ENCODE measurements at regions of chr9 and their contacts with region 1.

Region 1: GRCh38 chr9:86434039-86434726 is 80.0 kb upstream of the TUT7 start:
- DNase-seq: peak in 1 of 2 donors; percentile 86
- H3K4me3 ChIP-seq: peak overlapping the region in 1 of 4 donors; percentile 5
- H3K27ac ChIP-seq: peak overlapping the region in 1 of 5 donors; percentile 35
- H3K4me1 ChIP-seq: peaks cover 0 to 9% (median 2%) of the 10 kb centered on the region in 4 donors
- H3K27me3 ChIP-seq: no peaks in the 10 kb centered on the region
- CTCF ChIP-seq: peak in 5 of 7 experiments; percentile 59 to 77 (median 71)
- EP300 ChIP-seq: no peak
- POLR2A ChIP-seq: no peak

Region 2: DNA sequence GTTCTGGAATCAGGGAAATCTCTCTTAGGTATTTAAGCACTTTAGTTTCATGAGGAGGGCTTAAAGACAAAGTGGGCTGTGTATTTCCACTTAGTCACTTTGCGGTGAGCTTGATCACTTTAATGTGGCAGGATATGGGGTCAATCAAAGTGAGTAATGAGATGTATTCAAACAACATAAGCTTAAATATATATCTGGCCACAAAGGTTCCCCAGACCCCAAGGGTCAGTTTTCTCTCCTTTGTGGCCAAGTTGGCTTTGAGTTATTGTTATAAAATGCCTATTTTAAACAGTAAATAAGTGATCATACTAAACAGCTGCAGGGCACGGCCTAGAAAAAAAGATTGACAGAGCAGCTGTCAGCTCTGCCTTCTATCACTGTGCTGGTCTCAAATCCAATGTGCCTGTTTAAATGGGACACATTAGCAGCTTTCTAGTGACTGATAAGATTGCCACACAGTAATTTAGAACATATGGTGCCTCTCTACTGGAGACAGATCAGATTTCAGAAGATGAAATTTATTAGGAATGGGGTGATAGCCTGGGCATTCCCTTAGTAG is 1056.4 kb before region 1 on chr9:
- intact Hi-C with region 1: no loop called
- DNase-seq: no peak
- H3K4me3 ChIP-seq: no peak overlapping the region
- H3K27ac ChIP-seq: no peak overlapping the region
- H3K4me1 ChIP-seq: no peaks in the 10 kb centered on the region
- H3K27me3 ChIP-seq: no peaks in the 10 kb centered on the region
- CTCF ChIP-seq: no peak
- EP300 ChIP-seq: no peak
- POLR2A ChIP-seq: no peak

Region 3: DNA sequence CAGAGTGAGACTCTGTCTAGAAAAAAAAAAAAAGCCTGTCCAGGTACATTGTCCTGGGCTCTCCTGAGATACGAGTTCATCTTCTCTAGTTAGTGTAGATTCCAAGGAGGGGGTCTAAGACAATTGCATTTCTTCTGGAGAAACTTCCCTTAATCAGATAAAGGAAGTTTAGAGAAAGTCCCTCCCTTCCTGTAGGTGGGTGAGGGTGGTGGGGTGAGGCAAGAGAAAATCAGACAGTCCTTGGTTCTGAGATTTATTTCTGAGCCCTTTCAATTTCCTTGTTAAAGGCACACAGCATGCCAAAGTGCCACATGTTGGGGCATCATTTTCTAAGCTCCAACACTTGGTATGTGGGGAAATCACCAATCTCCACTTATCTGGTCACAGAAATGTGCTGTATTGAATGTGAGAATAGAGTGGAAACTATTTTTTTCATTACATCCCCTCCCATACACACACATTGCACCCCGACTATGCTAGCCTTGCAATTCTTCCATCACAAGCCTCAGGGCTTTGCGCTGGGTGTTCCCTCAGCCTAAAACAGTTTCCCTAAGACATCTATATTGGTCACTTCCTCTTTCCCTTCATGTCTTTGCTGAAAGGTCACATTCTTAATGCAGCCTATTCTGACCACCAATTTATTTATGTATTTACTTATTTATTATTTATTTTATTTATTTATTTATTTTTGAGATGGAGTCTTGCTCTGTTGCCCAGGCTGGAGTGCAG is 74.9 kb before region 1 on chr9:
- intact Hi-C with region 1: no loop called
- DNase-seq: no peak
- H3K4me3 ChIP-seq: no peak overlapping the region
- H3K27ac ChIP-seq: no peak overlapping the region
- H3K4me1 ChIP-seq: peaks cover 0 to 13% (median 4%) of the 10 kb centered on the region in 4 donors
- H3K27me3 ChIP-seq: no peaks in the 10 kb centered on the region
- CTCF ChIP-seq: no peak
- EP300 ChIP-seq: no peak
- POLR2A ChIP-seq: no peak

Region 4: GRCh38 chr9:87324613-87325194 is 890.5 kb after region 1 on chr9:
- intact Hi-C with region 1: loop called (anchors 5 kb)
- DNase-seq: peak in 1 of 2 donors; percentile 84
- H3K4me3 ChIP-seq: no peak overlapping the region
- H3K27ac ChIP-seq: no peak overlapping the region
- H3K4me1 ChIP-seq: peaks cover 0 to 5% (median 1%) of the 10 kb centered on the region in 4 donors
- H3K27me3 ChIP-seq: no peaks in the 10 kb centered on the region
- CTCF ChIP-seq: peak in 5 of 7 experiments; percentile 73 to 87 (median 83)
- EP300 ChIP-seq: no peak
- POLR2A ChIP-seq: no peak

Measured in stomach (tissue), 19 donors.